Right lobe of liver (tissue), 6 donors: ENCODE measurements at regions of chr1 and their contacts with region 1.

Region 1: DNA sequence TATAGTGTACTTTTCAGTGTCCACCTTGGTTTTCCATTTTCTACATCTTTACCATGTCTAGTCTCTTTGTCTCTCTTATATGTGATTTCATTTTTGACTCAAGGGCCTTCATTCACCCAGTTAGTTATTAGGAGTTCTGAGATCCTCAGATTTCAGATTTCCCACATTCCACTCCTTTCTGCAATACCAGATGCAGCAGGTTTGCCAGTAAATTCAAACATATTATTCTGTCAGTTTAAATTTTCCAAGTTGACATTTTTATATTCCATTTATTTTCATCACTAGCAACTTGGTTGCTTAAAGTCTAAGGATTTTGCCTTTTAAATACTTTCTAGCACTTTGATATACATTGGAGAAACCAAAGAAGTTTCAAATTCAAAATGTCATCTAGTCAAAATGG is 42.4 kb downstream of the ABL2 start:
- DNase-seq: no peak
- ATAC-seq: no peak
- H3K4me3 ChIP-seq: no peak overlapping the region
- H3K27ac ChIP-seq: no peak overlapping the region
- H3K4me1 ChIP-seq: peaks cover 0 to 11% (median 0%) of the 10 kb centered on the region in 4 donors
- H3K27me3 ChIP-seq: no peaks in the 10 kb centered on the region
- CTCF ChIP-seq: no peak
- POLR2A ChIP-seq: no peak

Region 2: GRCh38 chr1:179121159-179121938 is 65.7 kb before region 1 on chr1:
- intact Hi-C with region 1: loop called in 1 of 2 experiments (anchors 10 kb)
- DNase-seq: no peak
- ATAC-seq: peak; percentile 70 to 83 (median 76)
- H3K4me3 ChIP-seq: no peak overlapping the region
- H3K27ac ChIP-seq: no peak overlapping the region
- H3K4me1 ChIP-seq: peaks cover 0 to 17% (median 5%) of the 10 kb centered on the region in 4 donors
- H3K27me3 ChIP-seq: no peaks in the 10 kb centered on the region
- CTCF ChIP-seq: peak; percentile 65 to 68 (median 66)
- POLR2A ChIP-seq: no peak